HCT116 (cell line): ENCODE measurements at regions of chr6 and their contacts with region 1.

Region 1: GRCh38 chr6:79078075-79079025 is at the start of gene PHIP:
- DNase-seq: peak; percentile 90
- ATAC-seq: peak; percentile 81
- H3K4me3 ChIP-seq: peak within 1 kb of the TSS; percentile 72 to 80
- H3K27ac ChIP-seq: peak within 1 kb of the TSS; percentile 77
- H3K4me1 ChIP-seq: peaks cover 4 to 18% of the 10 kb centered on the region in 2 experiments; a peak in 3 of 4 replicates
- H3K27me3 ChIP-seq: no peaks in the 10 kb centered on the region
- CTCF ChIP-seq: no peak
- POLR2A ChIP-seq: peak; percentile 91
- RAD21 ChIP-seq: no peak
- total RNA-seq, gene PHIP: 22.6 TPM

Region 2: DNA sequence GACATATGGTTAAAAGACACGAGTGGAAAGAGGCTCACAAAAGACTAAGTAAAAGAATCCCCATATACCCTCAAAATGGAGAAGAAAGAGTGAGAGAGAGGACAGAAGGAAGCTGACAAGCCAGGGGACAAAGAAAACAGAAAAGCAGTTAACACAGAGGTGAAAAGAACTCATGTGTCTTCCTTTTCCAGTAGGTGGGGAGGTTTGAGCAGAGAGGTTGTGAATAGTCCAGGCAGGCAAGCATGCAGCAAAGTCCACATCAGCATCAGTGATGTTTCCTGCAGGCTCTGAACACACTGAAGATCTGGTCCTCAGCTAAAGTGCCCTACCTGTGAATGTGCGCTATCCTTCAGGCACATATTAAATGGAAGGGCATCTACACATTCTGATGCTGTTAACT is 407.5 kb before region 1 on chr6:
- CTCF ChIA-PET with region 1: no interaction called
- POLR2A ChIA-PET with region 1: no interaction called
- RAD21 ChIA-PET with region 1: no interaction called
- intact Hi-C with region 1: no loop called
- DNase-seq: no peak
- ATAC-seq: no peak
- H3K4me3 ChIP-seq: no peak overlapping the region
- H3K27ac ChIP-seq: no peak overlapping the region
- H3K4me1 ChIP-seq: no peaks in the 10 kb centered on the region
- H3K27me3 ChIP-seq: no peaks in the 10 kb centered on the region
- CTCF ChIP-seq: no peak
- POLR2A ChIP-seq: no peak
- RAD21 ChIP-seq: no peak

Region 3: GRCh38 chr6:78709021-78709420 is 369.3 kb before region 1 on chr6:
- CTCF ChIA-PET with region 1: no interaction called
- POLR2A ChIA-PET with region 1: no interaction called
- RAD21 ChIA-PET with region 1: no interaction called
- intact Hi-C with region 1: no loop called
- DNase-seq: no peak
- ATAC-seq: no peak
- H3K4me3 ChIP-seq: no peak overlapping the region
- H3K27ac ChIP-seq: no peak overlapping the region
- H3K4me1 ChIP-seq: no peaks in the 10 kb centered on the region
- H3K27me3 ChIP-seq: no peaks in the 10 kb centered on the region
- CTCF ChIP-seq: 0 out of 6 replicates have a peak, but pooled peaks of 1 of the 3 experiments have one; percentile 12
- POLR2A ChIP-seq: no peak
- RAD21 ChIP-seq: no peak

Region 4: GRCh38 chr6:79233611-79234149 is 155.3 kb after region 1 on chr6:
- CTCF ChIA-PET with region 1: no interaction called
- POLR2A ChIA-PET with region 1: no interaction called
- RAD21 ChIA-PET with region 1: no interaction called
- intact Hi-C with region 1: loop called (anchors 1 kb)
- DNase-seq: peak; percentile 77
- ATAC-seq: peak; percentile 86
- H3K4me3 ChIP-seq: peak overlapping the region; percentile 86 to 94
- H3K27ac ChIP-seq: peak overlapping the region; percentile 73
- H3K4me1 ChIP-seq: peaks cover 4 to 8% of the 10 kb centered on the region in 2 experiments; a peak in 2 of 4 replicates
- H3K27me3 ChIP-seq: no peaks in the 10 kb centered on the region
- CTCF ChIP-seq: peak in 2 of 3 experiments; percentile 33 to 35; a peak in 4 of 6 replicates
- POLR2A ChIP-seq: no peak
- RAD21 ChIP-seq: no peak

Region 5: GRCh38 chr6:79544939-79545450 is 466.6 kb after region 1 on chr6:
- CTCF ChIA-PET with region 1: no interaction called
- POLR2A ChIA-PET with region 1: no interaction called
- RAD21 ChIA-PET with region 1: no interaction called
- intact Hi-C with region 1: loop called (anchors 10 kb)
- DNase-seq: peak; percentile 97
- ATAC-seq: peak; percentile 99
- H3K4me3 ChIP-seq: peak overlapping the region in 1 of 2 experiments; percentile 14; a peak in 1 of 4 replicates
- H3K27ac ChIP-seq: no peak overlapping the region; the same call in 1 of the 2 replicates
- H3K4me1 ChIP-seq: peaks cover 17 to 26% of the 10 kb centered on the region in 2 experiments
- H3K27me3 ChIP-seq: no peaks in the 10 kb centered on the region
- CTCF ChIP-seq: peak in 2 of 3 experiments; percentile 47 to 65; a peak in 4 of 6 replicates
- POLR2A ChIP-seq: no peak
- RAD21 ChIP-seq: peak; percentile 43